ENCODE measurements at regions of chr6 and their contacts with region 1.

Region 1: DNA sequence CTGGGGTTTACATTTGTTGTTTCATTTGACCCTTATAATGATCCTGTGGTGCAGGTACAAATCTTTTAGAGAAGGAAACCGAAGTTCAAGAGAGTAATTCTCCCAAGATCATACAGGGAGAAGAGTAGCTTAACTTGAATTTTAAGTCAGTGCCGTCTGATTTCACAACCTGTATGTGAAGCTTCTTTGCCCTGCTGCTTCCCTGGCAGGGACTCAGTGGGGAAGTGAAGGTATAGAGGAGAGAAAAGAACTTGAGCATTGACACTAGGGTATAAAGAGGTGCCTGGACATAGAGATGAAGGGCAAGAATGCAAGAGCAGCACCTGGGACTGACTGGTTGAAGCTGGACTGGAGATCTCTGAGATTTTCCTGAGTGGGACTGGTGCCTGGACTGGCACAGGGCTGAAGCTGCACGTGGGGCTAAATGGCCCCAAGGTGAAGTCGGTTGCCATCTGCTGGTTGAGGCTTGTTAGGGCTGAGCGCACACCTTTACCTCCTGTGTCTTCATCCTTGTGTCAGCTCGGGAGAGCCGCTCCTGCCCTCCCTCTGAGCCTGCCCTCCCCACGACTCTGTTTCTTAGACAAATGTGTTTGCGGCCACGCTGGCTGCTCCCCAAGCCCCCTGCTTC is 41.8 kb downstream of the FARS2 start:
- DNase-seq: peak; percentile 28 to 53
- ATAC-seq: peak; percentile 89 to 92
- H3K4me3 ChIP-seq: no peak overlapping the region
- H3K27ac ChIP-seq: peak overlapping the region in 1 of 4 donors; percentile 6
- H3K4me1 ChIP-seq: peaks cover 19% of the 10 kb centered on the region in 2 donors
- H3K27me3 ChIP-seq: no peaks in the 10 kb centered on the region
- CTCF ChIP-seq: peak; percentile 34 to 79 (median 64)
- POLR2A ChIP-seq: no peak

Region 2: GRCh38 chr6:5053038-5053437 is 250.1 kb before region 1 on chr6:
- in situ Hi-C with region 1: no loop called
- intact Hi-C with region 1: loop called (anchors 2 kb)
- DNase-seq: no peak
- ATAC-seq: no peak
- H3K4me3 ChIP-seq: no peak overlapping the region
- H3K27ac ChIP-seq: no peak overlapping the region
- H3K4me1 ChIP-seq: no peaks in the 10 kb centered on the region
- H3K27me3 ChIP-seq: no peaks in the 10 kb centered on the region
- CTCF ChIP-seq: no peak
- POLR2A ChIP-seq: no peak

Region 3: DNA sequence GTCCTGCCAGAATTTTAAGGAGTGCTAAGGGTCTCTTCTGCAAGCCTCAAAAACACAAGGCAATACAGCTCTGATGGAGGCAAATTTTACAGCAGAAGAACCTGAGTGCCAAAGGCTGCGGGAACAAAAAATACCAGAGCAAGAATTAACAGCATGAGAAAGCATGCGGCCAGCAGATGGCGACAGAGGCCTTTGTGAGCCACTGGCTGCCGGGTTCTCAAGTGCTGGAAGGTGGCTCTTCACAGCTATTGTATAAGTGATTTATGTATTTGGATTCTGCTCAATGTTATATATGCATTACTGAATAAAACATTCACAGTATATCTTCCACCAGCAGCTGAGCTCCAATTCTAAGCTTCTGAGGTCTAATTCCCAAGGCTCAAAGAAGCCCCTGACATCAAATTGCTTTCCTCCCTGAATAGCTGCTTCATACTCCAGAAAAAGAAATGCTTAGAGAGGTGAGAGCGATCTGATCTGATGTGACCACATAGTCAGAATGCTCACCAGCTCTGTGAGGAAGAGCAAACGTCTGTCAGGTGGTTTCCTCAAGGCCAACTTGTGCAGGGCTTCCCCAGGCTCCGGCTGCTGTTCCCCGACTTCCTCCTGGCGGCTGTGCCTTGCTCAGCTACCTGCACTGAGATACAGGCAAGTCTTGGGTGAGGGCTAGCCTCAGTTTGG is 159.3 kb before region 1 on chr6:
- in situ Hi-C with region 1: loop called in 1 of 4 experiments (anchors 10 kb)
- intact Hi-C with region 1: loop called (anchors 1 kb)
- DNase-seq: peak; percentile 59 to 72
- ATAC-seq: peak; percentile 82 to 90
- H3K4me3 ChIP-seq: no peak overlapping the region
- H3K27ac ChIP-seq: no peak overlapping the region
- H3K4me1 ChIP-seq: peaks cover 4 to 10% of the 10 kb centered on the region in 2 donors
- H3K27me3 ChIP-seq: no peaks in the 10 kb centered on the region
- CTCF ChIP-seq: peak; percentile 81 to 96 (median 87)
- POLR2A ChIP-seq: no peak

Region 4: DNA sequence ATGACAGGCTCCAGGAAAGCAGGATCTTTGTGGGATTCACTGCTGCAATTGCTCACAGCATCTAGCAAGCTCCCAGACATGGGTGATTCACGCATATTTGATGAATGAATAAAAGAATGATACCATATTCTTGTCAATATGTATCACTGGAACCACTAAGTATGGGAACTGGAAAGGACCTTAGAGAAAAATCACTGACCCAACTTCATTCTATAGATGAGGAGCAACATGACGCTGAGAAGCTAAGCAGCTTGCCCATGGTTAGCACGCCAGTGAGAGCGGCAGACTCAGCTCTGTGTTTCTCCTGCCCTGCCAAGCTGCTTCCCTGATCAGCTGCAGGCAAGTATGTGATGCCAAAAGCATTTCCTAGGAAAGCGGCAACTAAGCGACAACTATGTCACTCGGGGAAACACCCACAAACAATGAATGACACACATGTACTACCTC is 151.1 kb before region 1 on chr6:
- in situ Hi-C with region 1: loop called in 2 of 4 experiments (anchors 10 kb)
- intact Hi-C with region 1: no loop called
- DNase-seq: no peak
- ATAC-seq: no peak
- H3K4me3 ChIP-seq: no peak overlapping the region
- H3K27ac ChIP-seq: no peak overlapping the region
- H3K4me1 ChIP-seq: no peaks in the 10 kb centered on the region
- H3K27me3 ChIP-seq: no peaks in the 10 kb centered on the region
- CTCF ChIP-seq: no peak
- POLR2A ChIP-seq: no peak

Region 5: DNA sequence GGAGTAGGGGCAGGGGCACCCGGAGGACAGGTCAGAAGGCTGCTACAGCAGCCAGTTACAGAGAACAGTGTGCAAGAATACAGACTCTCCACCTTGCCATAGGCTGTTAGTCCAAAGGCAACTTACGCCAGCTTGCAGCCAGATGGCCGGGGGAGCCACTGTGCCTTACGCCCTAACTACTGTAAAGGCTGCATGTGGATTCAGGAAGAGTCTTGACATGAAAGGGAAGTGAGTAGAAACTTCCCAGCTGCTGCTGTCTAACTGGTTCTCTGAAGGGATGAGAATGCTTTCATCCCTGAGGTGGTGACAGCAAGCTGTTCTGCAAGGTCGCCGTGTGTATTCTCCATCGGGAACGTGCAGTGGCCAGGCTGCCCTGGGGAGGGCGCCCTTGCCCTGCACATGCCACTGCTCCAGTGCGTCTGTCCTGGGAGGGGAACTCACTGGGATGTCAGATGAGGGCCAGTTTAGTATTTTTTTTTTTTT is 88.5 kb before region 1 on chr6:
- in situ Hi-C with region 1: no loop called
- intact Hi-C with region 1: loop called (anchors 1 kb)
- DNase-seq: no peak
- ATAC-seq: no peak
- H3K4me3 ChIP-seq: no peak overlapping the region
- H3K27ac ChIP-seq: no peak overlapping the region
- H3K4me1 ChIP-seq: no peaks in the 10 kb centered on the region
- H3K27me3 ChIP-seq: no peaks in the 10 kb centered on the region
- CTCF ChIP-seq: peak; percentile 10 to 58 (median 19)
- POLR2A ChIP-seq: no peak

Region 6: DNA sequence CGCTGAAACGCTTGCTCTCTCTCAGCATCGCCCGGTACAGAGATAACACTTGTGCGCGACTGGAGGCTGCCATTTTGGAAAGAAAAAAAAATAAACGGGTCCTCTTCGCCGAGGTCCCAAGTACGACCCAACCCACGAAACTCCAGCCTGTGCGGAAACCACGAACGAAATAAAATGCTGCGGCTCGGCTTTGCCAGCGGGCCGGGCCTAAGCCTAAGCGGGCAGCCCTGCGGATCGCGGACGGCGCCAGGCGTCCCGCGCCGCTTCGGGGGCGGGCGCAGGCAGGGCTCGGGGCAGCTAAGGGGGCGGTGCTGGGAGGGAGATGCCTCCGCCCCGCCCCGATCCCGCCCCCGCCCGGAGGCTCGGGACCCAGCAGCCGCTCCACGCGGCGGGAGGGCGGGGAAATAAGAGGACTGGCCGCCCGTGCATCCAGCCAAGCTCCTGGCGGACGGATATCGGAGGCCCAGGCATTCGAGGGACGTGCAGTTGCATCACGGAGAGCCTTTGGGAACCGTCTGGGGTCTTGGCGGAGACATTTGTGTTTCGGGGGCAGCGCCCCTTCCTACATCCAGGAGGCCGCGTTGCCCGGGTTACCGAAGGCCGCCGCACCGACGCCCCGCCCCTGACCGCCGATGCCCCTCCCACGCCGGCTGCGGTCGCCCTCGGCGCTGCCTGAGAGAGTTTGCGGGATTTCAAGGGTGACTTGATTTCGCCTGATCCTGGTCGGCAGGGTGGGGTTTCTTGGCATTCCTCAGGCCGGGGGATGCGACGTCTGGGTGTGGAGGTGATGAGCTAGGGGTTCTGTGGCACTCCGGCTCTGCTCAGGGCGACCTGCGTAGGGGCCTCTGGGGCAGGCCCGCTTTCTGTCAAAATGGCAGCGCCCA is 42.2 kb before region 1 on chr6 and contains the starts of genes FARS2 and LYRM4:
- in situ Hi-C with region 1: no loop called
- intact Hi-C with region 1: loop called (anchors 5 kb)
- DNase-seq: peak; percentile 64 to 81
- ATAC-seq: peak; percentile 93 to 94
- H3K4me3 ChIP-seq: peak within 1 kb of the TSS; percentile 58 to 97 (median 86)
- H3K27ac ChIP-seq: peak within 1 kb of the TSS; percentile 85 to 99 (median 94)
- H3K4me1 ChIP-seq: peaks cover 15 to 24% of the 10 kb centered on the region in 2 donors
- H3K27me3 ChIP-seq: no peaks in the 10 kb centered on the region
- CTCF ChIP-seq: peak in 2 of 5 experiments; percentile 36 to 45
- POLR2A ChIP-seq: peak; percentile 60 to 68
- total RNA-seq, gene FARS2: 13.6 to 24.0 (median 15.8) TPM
- total RNA-seq, gene LYRM4: 8.4 to 20.1 (median 12.2) TPM

Region 7: DNA sequence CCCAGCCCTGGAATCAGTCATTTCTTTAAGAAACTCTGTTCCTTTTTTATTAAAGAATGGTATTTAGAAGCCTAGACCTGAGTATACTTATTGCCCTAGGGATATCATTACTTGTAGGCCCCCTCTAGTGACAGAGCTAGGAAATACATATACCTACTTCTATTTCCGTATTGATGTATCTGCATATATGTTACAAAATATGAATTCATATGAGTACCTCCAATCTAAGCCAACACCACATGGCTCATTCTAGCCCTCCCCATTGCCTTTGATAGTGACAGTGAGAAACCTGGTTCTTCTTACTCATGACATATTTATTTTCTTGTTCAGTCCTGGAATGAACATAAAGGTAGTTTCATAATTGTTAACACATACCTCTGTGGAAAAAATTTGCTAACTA is 95.4 kb after region 1 on chr6:
- in situ Hi-C with region 1: no loop called
- intact Hi-C with region 1: loop called (anchors 2 kb)
- DNase-seq: no peak
- ATAC-seq: peak in 1 of 2 donors; percentile 30
- H3K4me3 ChIP-seq: no peak overlapping the region
- H3K27ac ChIP-seq: no peak overlapping the region
- H3K4me1 ChIP-seq: no peaks in the 10 kb centered on the region
- H3K27me3 ChIP-seq: no peaks in the 10 kb centered on the region
- CTCF ChIP-seq: peak in 4 of 5 experiments; percentile 26 to 48 (median 38)
- POLR2A ChIP-seq: no peak

Measured in gastrocnemius medialis (tissue), 4 donors.